ENCODE measurements at regions of chr14 and their contacts with region 1.

Region 1: DNA sequence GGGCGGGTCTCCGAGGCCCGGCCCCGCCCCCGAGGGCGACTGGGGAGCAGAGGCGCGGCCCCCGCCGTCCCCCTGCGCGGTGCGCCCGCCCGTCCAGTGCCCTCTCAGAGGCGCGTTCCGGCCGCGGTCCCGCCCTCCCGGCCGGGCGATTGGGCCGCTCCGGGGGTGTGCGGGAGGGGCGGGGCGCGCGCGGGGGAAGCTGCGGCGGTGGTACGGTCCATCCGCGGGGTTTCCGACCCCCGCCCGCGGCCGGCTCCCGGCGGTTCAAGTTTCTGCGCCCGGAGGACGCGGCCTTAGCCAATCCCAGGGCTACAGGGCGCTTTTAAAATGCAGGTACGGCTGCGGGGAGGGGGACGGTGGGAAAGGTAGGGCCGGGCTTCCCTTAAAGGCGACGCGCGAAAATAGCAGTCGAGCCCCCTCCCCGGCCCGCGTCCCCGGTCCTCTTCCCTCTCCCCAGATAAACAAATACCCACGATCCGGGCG is 317 bp upstream of the CCDC85C start:
- DNase-seq: peak; percentile 81 to 96
- H3K4me3 ChIP-seq: peak overlapping the region; percentile 78 to 81
- H3K27ac ChIP-seq: peak overlapping the region; percentile 77 to 81
- H3K4me1 ChIP-seq: peaks cover 4 to 8% of the 10 kb centered on the region in 2 donors
- H3K27me3 ChIP-seq: no peaks in the 10 kb centered on the region
- CTCF ChIP-seq: no peak

Region 2: DNA sequence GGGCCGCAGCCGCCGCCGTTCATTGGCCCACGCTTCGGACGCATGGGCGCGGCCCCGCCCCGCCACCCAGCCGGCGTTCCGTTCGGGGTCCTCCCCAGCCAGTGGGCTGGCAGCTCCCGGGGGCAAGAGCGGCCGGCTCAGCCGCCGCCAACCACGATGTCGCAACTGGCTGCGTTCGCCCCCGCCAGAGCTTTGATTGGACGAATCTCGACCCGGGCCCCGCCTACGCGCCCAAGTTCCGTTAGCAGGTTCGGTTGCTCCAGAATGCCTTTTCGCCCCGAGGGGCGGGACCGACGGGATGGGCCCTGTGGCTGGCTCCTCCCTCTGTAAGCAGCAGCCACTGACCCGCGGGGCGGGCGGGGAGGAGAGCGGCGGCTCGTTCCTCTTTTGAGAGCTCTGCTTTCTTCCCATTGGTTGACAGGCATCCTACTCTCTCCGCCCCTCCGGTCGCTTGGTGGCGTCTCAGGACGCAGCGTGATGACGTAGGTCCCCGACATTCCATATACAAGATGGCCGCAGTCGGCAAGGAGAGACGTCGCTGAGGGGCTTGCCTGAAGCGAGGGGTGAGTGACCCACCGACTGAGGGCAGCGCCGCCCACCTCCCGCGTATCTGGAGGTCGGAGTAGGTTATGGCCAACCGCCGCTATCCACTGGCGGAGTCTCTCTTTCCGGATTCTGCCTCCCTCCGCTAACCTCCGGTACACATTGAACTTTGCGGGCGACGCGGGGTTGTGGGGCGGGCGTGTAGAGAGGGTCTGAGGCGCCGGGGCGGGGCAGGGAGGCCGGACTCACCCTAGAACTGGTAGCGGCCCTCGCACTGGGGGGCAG is 123.2 kb before region 1 on chr14 and contains the start of gene CCNK:
- intact Hi-C with region 1: loop called (anchors 1 kb)
- DNase-seq: peak; percentile 100
- H3K4me3 ChIP-seq: peak within 1 kb of the TSS; percentile 87 to 95
- H3K27ac ChIP-seq: peak within 1 kb of the TSS; percentile 96 to 98
- H3K4me1 ChIP-seq: peaks cover 6 to 34% of the 10 kb centered on the region in 2 donors
- H3K27me3 ChIP-seq: no peaks in the 10 kb centered on the region
- CTCF ChIP-seq: no peak
- total RNA-seq, gene CCNK: 21.9 TPM

Region 3: DNA sequence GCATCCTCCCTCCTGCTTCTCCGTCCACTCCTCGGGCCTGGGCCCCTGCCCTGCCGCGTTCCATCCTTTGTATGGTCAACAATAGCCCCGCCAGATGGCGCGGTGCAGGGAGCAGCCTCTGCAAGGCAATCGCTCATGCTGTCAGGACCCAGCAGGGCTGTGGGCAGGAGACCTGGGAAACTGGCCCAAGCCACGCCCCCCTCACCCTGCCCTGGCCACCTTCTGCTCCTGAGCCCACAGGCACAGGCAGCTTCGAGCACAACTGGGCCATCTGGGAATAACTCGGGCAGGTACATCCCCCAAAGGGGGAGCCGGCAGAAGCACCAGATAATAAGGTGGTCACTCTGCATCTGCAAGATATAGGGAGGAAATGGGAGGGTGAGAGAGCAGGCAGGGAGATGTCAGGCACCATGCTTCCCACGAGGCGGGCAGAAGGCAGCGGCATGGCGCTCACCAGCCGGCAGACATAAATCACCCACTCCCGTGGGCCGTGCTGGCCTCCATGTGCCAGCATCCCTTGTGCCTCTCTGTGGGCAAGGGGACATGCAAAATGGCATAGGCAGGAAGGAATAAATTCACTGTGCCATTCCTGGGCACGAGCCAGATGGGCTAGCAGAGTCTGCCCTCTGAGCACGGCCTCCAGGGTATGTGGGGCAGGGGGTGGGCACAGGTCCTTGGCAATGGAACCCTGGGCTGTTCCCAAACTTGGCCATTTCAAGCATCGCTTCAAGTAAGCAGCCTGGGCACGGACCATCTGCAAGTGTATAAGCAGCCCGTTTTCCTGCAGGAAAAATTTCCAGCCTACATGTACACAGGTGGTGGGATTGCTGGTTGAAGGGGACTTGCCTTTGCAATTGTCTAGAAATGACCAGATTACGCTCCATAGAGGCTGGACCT is 40.8 kb before region 1 on chr14:
- intact Hi-C with region 1: loop called (anchors 1 kb)
- DNase-seq: peak in 1 of 2 donors; percentile 80
- H3K4me3 ChIP-seq: no peak overlapping the region
- H3K27ac ChIP-seq: no peak overlapping the region
- H3K4me1 ChIP-seq: peaks cover 2 to 10% of the 10 kb centered on the region in 2 donors
- H3K27me3 ChIP-seq: no peaks in the 10 kb centered on the region
- CTCF ChIP-seq: peak in 2 of 3 experiments; percentile 35 to 45

Region 4: GRCh38 chr14:99793213-99794150 is 189.2 kb after region 1 on chr14 and contains the start of gene EML1:
- intact Hi-C with region 1: loop called (anchors 10 kb)
- DNase-seq: peak in 1 of 2 donors; percentile 89
- H3K4me3 ChIP-seq: peak within 1 kb of the TSS; percentile 73 to 84
- H3K27ac ChIP-seq: peak within 1 kb of the TSS; percentile 88 to 96
- H3K4me1 ChIP-seq: peaks cover 0 to 6% of the 10 kb centered on the region in 2 donors
- H3K27me3 ChIP-seq: no peaks in the 10 kb centered on the region
- CTCF ChIP-seq: no peak
- total RNA-seq, gene EML1: 28.3 TPM

Region 5: DNA sequence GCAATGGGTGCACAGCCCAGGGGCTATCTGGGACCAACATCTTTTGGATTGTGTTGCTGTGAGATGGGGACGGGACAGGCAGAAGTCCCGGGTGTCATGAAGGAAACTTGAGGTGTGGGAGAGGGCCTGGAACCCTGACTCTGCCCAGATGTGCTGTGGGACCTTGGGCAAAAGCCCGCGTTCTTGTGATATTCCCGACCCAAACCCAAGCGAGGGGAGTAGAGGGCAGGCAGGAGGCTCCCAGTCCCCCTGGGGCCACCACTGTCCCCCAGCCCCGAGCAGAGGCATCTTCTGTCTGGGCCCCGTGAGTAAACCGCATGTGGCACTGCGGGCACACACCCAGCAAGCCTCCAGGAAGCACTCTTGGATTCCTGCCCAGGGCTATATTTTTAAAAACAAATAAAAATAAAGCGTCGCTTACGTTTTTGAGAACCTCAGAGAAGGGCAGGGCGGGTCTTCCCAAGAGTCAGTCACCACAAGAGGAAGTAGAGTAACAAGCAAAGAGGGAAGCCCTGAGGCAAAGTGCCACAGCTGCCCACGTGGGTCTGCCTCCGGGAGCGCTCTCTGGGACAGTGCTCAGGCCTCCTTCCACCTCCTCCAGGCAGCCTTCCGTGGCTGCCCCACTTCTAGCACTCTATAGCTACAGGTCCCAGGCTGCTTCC is 943.4 kb after region 1 on chr14:
- intact Hi-C with region 1: loop called (anchors 5 kb)
- DNase-seq: peak in 1 of 2 donors; percentile 76
- H3K4me3 ChIP-seq: no peak overlapping the region
- H3K27ac ChIP-seq: peak overlapping the region in 1 of 2 donors; percentile 33
- H3K4me1 ChIP-seq: peaks cover 0 to 8% of the 10 kb centered on the region in 2 donors
- H3K27me3 ChIP-seq: no peaks in the 10 kb centered on the region
- CTCF ChIP-seq: no peak

Measured in ascending aorta (tissue), 2 donors.